ENCODE measurements at regions of chr19 and their contacts with region 1.

Region 1: DNA sequence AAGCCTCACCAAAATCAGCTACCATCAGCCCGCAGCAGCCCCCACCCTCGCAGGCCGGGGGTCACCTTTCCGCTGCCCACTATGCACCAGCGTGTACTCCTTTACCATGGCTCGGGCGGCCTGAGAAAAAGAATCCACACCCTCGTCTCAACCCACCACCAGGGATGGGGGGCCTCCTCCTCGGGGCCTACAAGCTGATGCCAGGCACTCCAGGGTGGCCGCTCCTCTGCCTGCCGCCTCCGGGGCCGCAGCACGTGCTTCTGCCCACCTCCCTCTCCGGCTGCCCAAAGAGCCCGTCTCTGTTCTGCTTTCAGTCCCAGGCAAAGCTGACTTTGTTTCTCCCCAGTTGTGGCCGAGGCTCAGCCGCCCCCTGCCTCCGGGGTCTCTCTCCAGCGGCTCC is 11.1 kb upstream of the MEX3D start:
- DNase-seq: no peak
- H3K4me3 ChIP-seq: no peak overlapping the region
- H3K27ac ChIP-seq: no peak overlapping the region
- H3K4me1 ChIP-seq: no peaks in the 10 kb centered on the region
- H3K27me3 ChIP-seq: no peaks in the 10 kb centered on the region
- CTCF ChIP-seq: no peak
- POLR2A ChIP-seq: no peak

Region 2: DNA sequence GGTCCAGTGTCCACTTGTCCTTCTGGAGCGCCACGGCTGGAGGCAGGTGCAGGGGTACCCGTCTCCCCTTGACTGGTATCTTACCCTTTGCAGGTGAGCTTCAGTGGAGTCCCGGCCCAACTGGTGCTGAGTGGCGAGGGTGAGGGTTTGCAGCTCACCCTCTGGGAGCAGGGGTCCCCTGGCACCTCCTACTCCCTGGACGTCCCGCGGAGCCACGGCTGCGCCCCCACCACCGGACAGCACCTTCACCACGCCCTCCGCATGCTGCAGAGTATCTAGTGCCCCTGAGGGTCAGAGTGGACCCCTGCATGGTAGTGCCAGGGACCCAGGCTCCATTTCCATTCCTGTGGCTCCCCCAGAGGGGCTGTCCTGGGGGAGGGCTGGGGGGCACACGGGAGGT is 44.2 kb before region 1 on chr19:
- intact Hi-C with region 1: loop called (anchors 1 kb)
- DNase-seq: no peak
- H3K4me3 ChIP-seq: no peak overlapping the region
- H3K27ac ChIP-seq: no peak overlapping the region
- H3K4me1 ChIP-seq: no peaks in the 10 kb centered on the region
- H3K27me3 ChIP-seq: no peaks in the 10 kb centered on the region
- CTCF ChIP-seq: no peak
- POLR2A ChIP-seq: no peak

Region 3: GRCh38 chr19:1624458-1624857 is 45.2 kb after region 1 on chr19:
- intact Hi-C with region 1: loop called (anchors 1 kb)
- DNase-seq: no peak
- H3K4me3 ChIP-seq: no peak overlapping the region
- H3K27ac ChIP-seq: no peak overlapping the region
- H3K4me1 ChIP-seq: no peaks in the 10 kb centered on the region
- H3K27me3 ChIP-seq: no peaks in the 10 kb centered on the region
- CTCF ChIP-seq: peak in 1 of 3 donors; percentile 38
- POLR2A ChIP-seq: no peak